Mucosa of descending colon (tissue), 3 donors: ENCODE measurements at regions of chr4 and their contacts with region 1.

Region 1: GRCh38 chr4:143482840-143483239 is 30.7 kb upstream of the SMARCA5 start:
- DNase-seq: peak in 1 of 3 donors; percentile 44
- ATAC-seq: peak; percentile 39
- H3K4me3 ChIP-seq: no peak overlapping the region
- H3K4me1 ChIP-seq: no peaks in the 10 kb centered on the region
- CTCF ChIP-seq: peak; percentile 15

Region 2: DNA sequence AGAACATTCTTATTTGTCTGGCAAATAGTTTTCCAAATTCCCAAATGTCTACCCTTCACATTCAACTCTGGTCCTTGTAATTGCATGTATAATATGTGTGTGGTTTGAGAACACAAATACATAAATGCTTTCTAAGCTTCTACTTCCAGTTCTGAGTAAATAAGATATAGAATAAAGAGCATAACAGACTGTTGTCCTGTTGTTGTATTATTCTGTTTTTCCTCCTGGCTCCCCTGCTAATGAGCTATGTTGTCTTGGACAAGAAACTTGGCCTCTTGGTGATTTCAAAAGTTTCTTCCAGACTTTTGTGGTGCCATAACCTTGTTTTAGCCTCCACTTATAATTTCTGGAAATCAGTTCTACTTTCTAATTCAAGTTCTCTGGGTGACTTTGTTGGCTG is 373.5 kb before region 1 on chr4:
- intact Hi-C with region 1: no loop called
- DNase-seq: no peak
- ATAC-seq: no peak
- H3K4me3 ChIP-seq: no peak overlapping the region
- H3K4me1 ChIP-seq: no peaks in the 10 kb centered on the region
- CTCF ChIP-seq: no peak

Region 3: DNA sequence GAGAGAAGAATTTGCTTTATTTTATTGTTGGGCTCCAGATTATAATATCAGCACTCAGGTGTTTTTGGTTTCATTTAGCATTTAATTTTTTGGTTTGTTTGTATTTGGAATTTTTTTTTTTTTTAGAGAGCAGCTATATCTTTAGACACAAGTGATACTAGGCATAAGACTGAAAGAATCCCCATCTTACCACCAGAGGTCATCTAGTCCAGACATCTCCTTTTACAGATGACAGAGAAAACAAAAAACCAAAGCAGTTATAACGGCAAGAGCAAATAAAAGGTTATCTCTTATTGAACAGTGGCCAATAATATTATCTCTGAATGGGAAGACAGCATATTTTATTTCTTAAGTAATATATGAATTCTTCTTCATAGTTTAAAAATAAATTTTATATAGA is 275.3 kb before region 1 on chr4:
- intact Hi-C with region 1: loop called (anchors 5 to 10 kb)
- DNase-seq: no peak
- ATAC-seq: no peak
- H3K4me3 ChIP-seq: no peak overlapping the region
- H3K4me1 ChIP-seq: no peaks in the 10 kb centered on the region
- CTCF ChIP-seq: no peak

Region 4: GRCh38 chr4:143375313-143376073 is 107.3 kb before region 1 on chr4:
- intact Hi-C with region 1: no loop called
- DNase-seq: peak in 2 of 3 donors; percentile 44 to 49
- ATAC-seq: peak; percentile 86
- H3K4me3 ChIP-seq: no peak overlapping the region
- H3K4me1 ChIP-seq: peaks cover 9% of the 10 kb centered on the region
- CTCF ChIP-seq: peak; percentile 16